ENCODE measurements at regions of chr16 and their contacts with region 1.

Region 1: GRCh38 chr16:24516900-24517669 is 22.3 kb upstream of the RBBP6 start:
- DNase-seq: peak; percentile 74
- H3K4me3 ChIP-seq: no peak overlapping the region
- H3K27ac ChIP-seq: no peak overlapping the region
- H3K27me3 ChIP-seq: peaks cover 2% of the 10 kb centered on the region
- CTCF ChIP-seq: peak; percentile 95

Region 2: DNA sequence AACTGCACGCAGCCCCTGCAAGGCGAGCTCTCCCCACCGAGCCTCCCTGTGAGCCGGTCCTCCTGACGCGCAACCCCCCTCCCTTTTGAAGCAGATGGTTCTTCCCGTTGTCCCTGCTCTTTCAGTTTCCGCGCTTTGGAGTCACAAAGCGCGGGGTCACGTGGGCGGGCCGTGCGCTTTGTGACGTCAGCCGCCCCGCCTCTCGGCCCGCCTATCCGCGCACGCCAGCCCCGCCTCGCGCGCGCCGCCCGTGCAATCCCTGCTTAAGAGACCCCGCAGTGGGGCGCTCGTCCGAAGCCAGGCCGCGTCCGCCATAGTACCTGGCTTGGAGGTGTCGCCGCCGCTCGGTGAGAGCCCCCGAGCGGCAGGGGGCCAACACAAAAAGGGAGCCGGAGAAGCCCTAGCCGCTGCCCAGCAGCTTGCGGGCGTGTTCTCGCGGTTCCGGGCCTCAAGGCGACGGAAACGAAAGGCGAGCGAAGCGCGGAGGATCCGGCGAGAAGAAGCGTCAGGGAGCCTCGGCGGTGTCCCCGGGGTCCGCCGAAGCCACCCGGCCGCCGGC is 22.3 kb after region 1 on chr16 and contains the start of gene RBBP6:
- CTCF ChIA-PET with region 1: interaction called, 29 read pairs
- POLR2A ChIA-PET with region 1: no interaction called
- DNase-seq: peak; percentile 91
- H3K4me3 ChIP-seq: peak within 1 kb of the TSS; percentile 92
- H3K27ac ChIP-seq: peak within 1 kb of the TSS; percentile 99
- H3K27me3 ChIP-seq: no peaks in the 10 kb centered on the region
- CTCF ChIP-seq: peak; percentile 36
- polyA plus RNA-seq, gene RBBP6: 32.4 and 41.7 TPM in 2 replicates

Region 3: GRCh38 chr16:25279491-25279890 is 762.4 kb after region 1 on chr16:
- CTCF ChIA-PET with region 1: no interaction called
- POLR2A ChIA-PET with region 1: no interaction called
- DNase-seq: no peak
- H3K4me3 ChIP-seq: no peak overlapping the region
- H3K27ac ChIP-seq: no peak overlapping the region
- H3K27me3 ChIP-seq: peaks cover 3% of the 10 kb centered on the region
- CTCF ChIP-seq: no peak